Mammary epithelial cell (primary cell): ENCODE measurements at regions of chr14 and their contacts with region 1.

Region 1: GRCh38 chr14:77181603-77182437 is at the start of gene TMEM63C:
- DNase-seq: peak; percentile 83
- H3K4me3 ChIP-seq: peak within 1 kb of the TSS; percentile 61 to 78 (median 70)
- H3K27ac ChIP-seq: no peak within 1 kb of the TSS
- H3K4me1 ChIP-seq: peaks cover 27% of the 10 kb centered on the region
- H3K27me3 ChIP-seq: no peaks in the 10 kb centered on the region
- CTCF ChIP-seq: peak in 1 of 2 donors; percentile 16
- total RNA-seq, gene TMEM63C: 6.3 to 8.3 TPM

Region 2: DNA sequence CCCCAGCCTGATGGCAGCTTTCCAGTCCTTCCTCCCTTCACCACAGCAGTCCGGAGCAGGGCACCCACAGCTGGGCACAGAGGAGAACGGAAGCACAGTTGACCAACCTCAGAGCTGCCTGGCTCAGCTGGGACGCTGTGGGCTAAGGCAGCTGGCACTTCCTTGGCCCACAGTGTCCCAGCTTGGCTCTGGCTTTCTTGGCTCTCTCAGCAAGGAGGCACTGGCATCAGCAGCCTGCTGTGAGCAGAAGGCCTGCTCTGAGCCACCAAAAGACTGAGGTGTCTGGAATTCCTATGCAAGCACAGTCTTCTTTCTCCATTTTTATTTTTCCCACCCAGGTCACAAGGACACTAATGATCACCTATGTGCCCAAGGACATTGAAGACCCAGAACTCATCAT is 56.5 kb after region 1 on chr14:
- CTCF ChIA-PET with region 1: no interaction called
- dilution Hi-C with region 1: loop called (anchors 5 kb)
- in situ Hi-C with region 1: no loop called
- intact Hi-C with region 1: no loop called
- DNase-seq: no peak
- H3K4me3 ChIP-seq: no peak overlapping the region
- H3K27ac ChIP-seq: no peak overlapping the region
- H3K4me1 ChIP-seq: no peaks in the 10 kb centered on the region
- H3K27me3 ChIP-seq: peaks cover 2% of the 10 kb centered on the region
- CTCF ChIP-seq: no peak

Region 3: DNA sequence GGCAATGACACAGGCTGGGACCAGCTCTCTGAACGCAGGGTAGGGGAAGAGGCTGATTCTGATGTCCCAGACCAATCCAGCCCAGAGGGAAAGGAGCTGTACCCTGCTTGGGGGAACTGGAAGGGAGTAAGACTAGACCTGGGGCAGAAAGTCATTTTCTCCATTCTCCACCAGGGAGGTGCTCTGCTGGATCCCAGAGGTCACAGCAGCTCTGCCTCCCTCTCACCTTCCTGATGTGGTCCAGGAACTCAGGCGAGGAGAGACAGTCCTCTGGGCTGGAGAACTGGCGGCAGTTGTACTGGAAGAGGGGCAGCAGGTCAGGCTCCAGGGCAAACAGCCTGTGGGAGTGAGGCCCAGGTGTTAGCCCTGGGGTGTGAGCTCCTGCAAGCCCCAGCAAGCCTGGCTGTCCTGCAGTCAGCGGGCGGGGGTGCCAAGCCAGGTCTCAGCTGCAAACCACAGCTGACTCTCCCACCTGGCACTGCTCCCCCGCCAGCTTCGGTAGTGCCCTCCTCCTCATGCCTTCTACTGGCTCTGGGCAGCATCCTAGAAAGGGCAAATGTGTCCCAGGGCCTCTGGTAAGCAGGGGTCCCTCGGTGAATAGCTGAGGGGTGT is 87.3 kb after region 1 on chr14:
- CTCF ChIA-PET with region 1: no interaction called
- dilution Hi-C with region 1: loop called (anchors 5 kb)
- in situ Hi-C with region 1: no loop called
- intact Hi-C with region 1: no loop called
- DNase-seq: peak; percentile 72
- H3K4me3 ChIP-seq: no peak overlapping the region
- H3K27ac ChIP-seq: no peak overlapping the region
- H3K4me1 ChIP-seq: peaks cover 21% of the 10 kb centered on the region
- H3K27me3 ChIP-seq: peaks cover 14% of the 10 kb centered on the region
- CTCF ChIP-seq: no peak